CD8-positive, alpha-beta T cell (primary cell): ENCODE measurements at regions of chr17 and their contacts with region 1.

Region 1: GRCh38 chr17:40622509-40622928 is 25.1 kb downstream of the SMARCE1 start:
- DNase-seq: peak in 4 of 9 experiments; percentile 32 to 80 (median 62)
- ATAC-seq: peak; percentile 74
- H3K4me3 ChIP-seq: peak overlapping the region in 1 of 2 experiments; percentile 6
- H3K4me3 Mint-ChIP-seq: peak overlapping the region; percentile 54
- H3K27ac ChIP-seq: peak overlapping the region; percentile 2 to 4
- H3K27ac Mint-ChIP-seq: peak overlapping the region; percentile 89
- H3K4me1 ChIP-seq: peaks cover 53% of the 10 kb centered on the region
- H3K4me1 Mint-ChIP-seq: peaks cover 53% of the 10 kb centered on the region
- H3K27me3 ChIP-seq: no peaks in the 10 kb centered on the region
- H3K27me3 Mint-ChIP-seq: no peaks in the 10 kb centered on the region
- CTCF ChIP-seq: no peak

Region 2: DNA sequence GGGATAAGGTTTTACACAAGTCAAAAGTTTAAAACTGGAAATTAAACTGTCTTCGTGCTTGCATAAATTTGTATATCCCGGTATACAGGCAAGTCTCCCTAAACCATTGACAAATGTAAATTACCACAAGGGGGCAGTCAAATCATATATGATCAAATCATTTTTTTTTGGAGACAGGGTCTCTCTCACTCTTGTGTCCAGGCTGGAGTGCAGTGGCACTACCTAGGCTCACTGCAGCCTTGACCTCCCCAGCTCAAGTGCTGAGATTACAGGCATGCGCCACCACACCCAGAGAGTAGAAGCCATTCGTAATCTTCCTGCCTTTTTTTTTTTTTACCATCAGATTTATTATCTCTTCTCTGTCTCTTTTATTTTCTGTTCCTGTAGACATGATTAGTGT is 223.3 kb before region 1 on chr17:
- CTCF ChIA-PET with region 1: no interaction called
- POLR2A ChIA-PET with region 1: no interaction called
- intact Hi-C with region 1: loop called (anchors 2 to 5 kb)
- DNase-seq: peak in 2 of 9 experiments; percentile 71 to 78
- ATAC-seq: peak; percentile 55
- H3K4me3 ChIP-seq: no peak overlapping the region
- H3K4me3 Mint-ChIP-seq: no peak overlapping the region
- H3K27ac ChIP-seq: no peak overlapping the region
- H3K27ac Mint-ChIP-seq: no peak overlapping the region
- H3K4me1 ChIP-seq: no peaks in the 10 kb centered on the region
- H3K4me1 Mint-ChIP-seq: peaks cover 16% of the 10 kb centered on the region
- H3K27me3 ChIP-seq: no peaks in the 10 kb centered on the region
- H3K27me3 Mint-ChIP-seq: no peaks in the 10 kb centered on the region
- CTCF ChIP-seq: peak; percentile 74

Region 3: GRCh38 chr17:40598663-40599467 is 23.7 kb before region 1 on chr17:
- CTCF ChIA-PET with region 1: interaction called, 66 read pairs
- POLR2A ChIA-PET with region 1: interaction called, 8 read pairs
- intact Hi-C with region 1: no loop called
- DNase-seq: peak in 8 of 9 experiments; percentile 48 to 95 (median 70)
- ATAC-seq: peak; percentile 66
- H3K4me3 ChIP-seq: peak overlapping the region; percentile 12 to 20
- H3K4me3 Mint-ChIP-seq: peak overlapping the region; percentile 69
- H3K27ac ChIP-seq: peak overlapping the region; percentile 82 to 92
- H3K27ac Mint-ChIP-seq: peak overlapping the region; percentile 100
- H3K4me1 ChIP-seq: peaks cover 98% of the 10 kb centered on the region
- H3K4me1 Mint-ChIP-seq: peaks cover 97% of the 10 kb centered on the region
- H3K27me3 ChIP-seq: no peaks in the 10 kb centered on the region
- H3K27me3 Mint-ChIP-seq: no peaks in the 10 kb centered on the region
- CTCF ChIP-seq: no peak

Region 4: DNA sequence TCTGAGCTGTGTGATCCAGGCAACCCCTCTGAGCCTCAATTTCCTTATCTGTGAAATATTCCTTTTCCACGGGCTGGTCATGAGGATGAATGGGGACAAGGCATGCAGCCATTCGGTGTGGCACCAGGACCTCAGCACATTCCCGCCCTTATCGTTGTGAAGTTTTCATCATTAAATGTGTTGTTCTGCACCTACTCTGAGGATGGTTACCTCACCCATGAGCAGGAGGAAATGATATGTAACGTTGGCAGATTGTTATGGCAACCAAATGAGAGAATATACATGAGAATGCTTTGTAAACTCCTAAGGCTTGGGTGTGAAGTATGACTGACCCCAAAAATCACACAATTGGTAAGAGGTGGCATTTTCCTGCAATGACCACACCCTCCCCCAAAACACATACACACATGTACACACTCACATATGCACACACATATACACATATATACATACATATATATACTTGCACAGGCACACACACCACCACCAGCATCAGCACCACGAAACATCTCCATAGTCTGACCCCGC is 14.4 kb before region 1 on chr17:
- CTCF ChIA-PET with region 1: interaction called, 66 read pairs
- POLR2A ChIA-PET with region 1: interaction called, 8 read pairs
- intact Hi-C with region 1: no loop called
- DNase-seq: peak in 4 of 9 experiments; percentile 42 to 94 (median 76)
- ATAC-seq: peak; percentile 56
- H3K4me3 ChIP-seq: peak overlapping the region; percentile 22 to 43
- H3K4me3 Mint-ChIP-seq: peak overlapping the region; percentile 66
- H3K27ac ChIP-seq: peak overlapping the region; percentile 92 to 99
- H3K27ac Mint-ChIP-seq: peak overlapping the region; percentile 98
- H3K4me1 ChIP-seq: peaks cover 97% of the 10 kb centered on the region
- H3K4me1 Mint-ChIP-seq: peaks cover 96% of the 10 kb centered on the region
- H3K27me3 ChIP-seq: no peaks in the 10 kb centered on the region
- H3K27me3 Mint-ChIP-seq: no peaks in the 10 kb centered on the region
- CTCF ChIP-seq: no peak

Region 5: DNA sequence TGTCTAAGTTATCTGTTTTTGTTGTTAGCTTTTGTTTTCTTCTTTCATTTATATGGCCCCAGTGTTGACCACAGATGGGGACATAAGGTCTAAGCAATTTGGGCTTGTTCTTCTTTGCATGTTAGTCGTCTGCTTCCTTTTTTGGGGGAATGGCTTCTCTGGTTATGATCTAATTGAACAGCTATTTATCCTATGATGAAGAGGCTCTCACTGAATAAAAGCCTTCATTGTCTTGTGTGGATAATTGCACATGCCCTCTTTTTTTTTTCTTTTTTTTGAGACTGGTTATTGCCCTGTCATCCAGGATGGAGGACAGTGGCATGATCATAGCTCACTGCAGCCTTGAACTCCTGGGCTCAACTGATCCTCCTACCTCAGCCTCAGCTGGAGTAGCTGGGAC is 11.4 kb after region 1 on chr17:
- CTCF ChIA-PET with region 1: interaction called, 22 read pairs
- POLR2A ChIA-PET with region 1: interaction called, 3 read pairs
- intact Hi-C with region 1: no loop called
- DNase-seq: no peak
- ATAC-seq: no peak
- H3K4me3 ChIP-seq: no peak overlapping the region
- H3K4me3 Mint-ChIP-seq: no peak overlapping the region
- H3K27ac ChIP-seq: no peak overlapping the region
- H3K27ac Mint-ChIP-seq: no peak overlapping the region
- H3K4me1 ChIP-seq: no peaks in the 10 kb centered on the region
- H3K4me1 Mint-ChIP-seq: peaks cover 11% of the 10 kb centered on the region
- H3K27me3 ChIP-seq: no peaks in the 10 kb centered on the region
- H3K27me3 Mint-ChIP-seq: no peaks in the 10 kb centered on the region
- CTCF ChIP-seq: no peak

Region 6: DNA sequence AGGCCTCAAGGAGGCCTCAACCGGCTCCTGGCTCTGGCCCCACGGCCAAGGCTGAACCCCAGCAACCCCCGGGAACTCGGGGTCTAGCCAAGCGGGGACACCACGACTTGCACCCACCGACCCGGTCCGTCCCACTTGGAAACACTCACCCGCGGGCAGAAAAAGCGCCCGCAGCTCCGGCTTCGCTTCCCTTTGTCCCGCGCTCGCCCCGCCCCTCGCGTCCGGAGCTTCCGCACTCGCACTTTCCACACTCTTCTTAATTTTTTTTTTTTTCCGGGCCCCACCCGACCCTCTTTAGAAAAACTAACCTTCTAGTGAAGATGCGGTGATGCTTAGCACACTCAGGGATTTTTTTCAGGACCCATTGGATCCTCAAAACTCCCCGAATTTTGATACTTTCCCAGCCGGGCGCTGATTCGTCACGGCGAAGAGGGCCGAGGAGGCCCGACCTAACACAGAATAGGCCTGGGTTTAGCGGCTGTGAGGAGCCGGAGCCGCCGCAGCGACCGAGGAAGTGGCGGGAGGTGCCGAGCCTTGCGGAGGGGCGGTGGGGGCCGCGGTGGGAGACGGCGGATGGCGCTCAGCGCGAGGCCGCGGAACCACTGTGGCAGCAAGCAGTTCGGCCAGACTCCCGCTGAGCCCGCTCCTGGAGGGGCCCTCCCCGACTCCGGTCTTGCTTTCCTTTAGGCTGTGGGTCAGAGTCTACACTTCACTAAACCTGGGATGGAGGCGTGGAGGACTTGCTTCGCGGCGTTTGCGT is 25.3 kb after region 1 on chr17 and contains the start of gene SMARCE1:
- CTCF ChIA-PET with region 1: interaction called, 10 read pairs
- POLR2A ChIA-PET with region 1: interaction called, 8 read pairs
- intact Hi-C with region 1: no loop called
- DNase-seq: peak; percentile 51 to 88 (median 73)
- ATAC-seq: peak; percentile 66
- H3K4me3 ChIP-seq: peak within 1 kb of the TSS; percentile 85 to 96
- H3K4me3 Mint-ChIP-seq: peak within 1 kb of the TSS; percentile 95
- H3K27ac ChIP-seq: peak within 1 kb of the TSS; percentile 95 to 99
- H3K27ac Mint-ChIP-seq: peak within 1 kb of the TSS; percentile 99
- H3K4me1 ChIP-seq: peaks cover 36% of the 10 kb centered on the region
- H3K4me1 Mint-ChIP-seq: peaks cover 40% of the 10 kb centered on the region
- H3K27me3 ChIP-seq: no peaks in the 10 kb centered on the region
- H3K27me3 Mint-ChIP-seq: no peaks in the 10 kb centered on the region
- CTCF ChIP-seq: no peak
- total RNA-seq, gene SMARCE1: 64.8 to 74.9 TPM

Region 7: GRCh38 chr17:40714473-40714872 is 92.0 kb after region 1 on chr17:
- CTCF ChIA-PET with region 1: no interaction called
- POLR2A ChIA-PET with region 1: no interaction called
- intact Hi-C with region 1: no loop called
- DNase-seq: no peak
- ATAC-seq: no peak
- H3K4me3 ChIP-seq: no peak overlapping the region
- H3K4me3 Mint-ChIP-seq: no peak overlapping the region
- H3K27ac ChIP-seq: no peak overlapping the region
- H3K27ac Mint-ChIP-seq: no peak overlapping the region
- H3K4me1 ChIP-seq: no peaks in the 10 kb centered on the region
- H3K4me1 Mint-ChIP-seq: no peaks in the 10 kb centered on the region
- H3K27me3 ChIP-seq: no peaks in the 10 kb centered on the region
- H3K27me3 Mint-ChIP-seq: peaks cover 8% of the 10 kb centered on the region
- CTCF ChIP-seq: no peak

Region 8: GRCh38 chr17:40791787-40792436 is 169.4 kb after region 1 on chr17:
- CTCF ChIA-PET with region 1: interaction called, 7 read pairs
- POLR2A ChIA-PET with region 1: no interaction called
- intact Hi-C with region 1: loop called (anchors 1 to 5 kb)
- DNase-seq: peak in 1 of 9 experiments; percentile 28
- ATAC-seq: no peak
- H3K4me3 ChIP-seq: no peak overlapping the region
- H3K4me3 Mint-ChIP-seq: no peak overlapping the region
- H3K27ac ChIP-seq: no peak overlapping the region
- H3K27ac Mint-ChIP-seq: no peak overlapping the region
- H3K4me1 ChIP-seq: no peaks in the 10 kb centered on the region
- H3K4me1 Mint-ChIP-seq: no peaks in the 10 kb centered on the region
- H3K27me3 ChIP-seq: peaks cover 0 to 2% of the 10 kb centered on the region in 2 experiments
- H3K27me3 Mint-ChIP-seq: peaks cover 29% of the 10 kb centered on the region
- CTCF ChIP-seq: peak; percentile 31